ENCODE measurements at regions of chr5 and their contacts with region 1.

Region 1: DNA sequence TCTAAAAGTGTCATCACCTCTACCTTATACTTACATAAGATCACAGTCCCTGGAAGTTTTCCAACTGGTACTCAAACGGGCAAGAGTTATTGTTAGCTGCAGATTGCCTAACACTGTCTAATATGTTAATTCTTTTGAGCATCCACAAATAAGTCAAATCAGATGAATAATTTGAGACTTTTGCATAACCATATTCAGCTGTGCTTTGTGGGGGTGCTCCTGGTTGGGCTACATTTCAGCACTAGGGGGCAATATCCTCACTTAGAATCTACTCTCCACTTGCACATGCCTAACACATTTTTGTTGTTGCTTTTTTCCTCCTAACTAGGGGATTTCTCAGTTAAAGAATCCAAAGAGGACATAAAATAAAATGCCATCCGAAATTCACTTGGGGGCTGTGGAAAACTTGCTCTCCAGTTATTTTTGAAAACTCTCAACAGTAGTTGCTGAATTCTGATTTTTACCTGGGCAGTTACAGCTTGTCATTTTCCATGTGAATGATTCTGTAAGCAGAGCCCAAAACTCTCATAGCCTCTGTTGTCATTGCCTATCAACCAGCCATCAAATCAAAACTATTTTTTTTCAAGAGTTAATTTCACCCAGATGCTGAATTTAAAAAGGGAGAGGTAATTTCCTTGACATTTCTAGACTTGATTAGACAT is 71.5 kb downstream of the TRIM36 start:
- DNase-seq: peak; percentile 57
- CTCF ChIP-seq: peak; percentile 74

Region 2: GRCh38 chr5:115109840-115110239 is 11.7 kb after region 1 on chr5:
- CTCF ChIA-PET with region 1: interaction called, 14 read pairs
- POLR2A ChIA-PET with region 1: no interaction called
- DNase-seq: no peak
- CTCF ChIP-seq: no peak

Region 3: DNA sequence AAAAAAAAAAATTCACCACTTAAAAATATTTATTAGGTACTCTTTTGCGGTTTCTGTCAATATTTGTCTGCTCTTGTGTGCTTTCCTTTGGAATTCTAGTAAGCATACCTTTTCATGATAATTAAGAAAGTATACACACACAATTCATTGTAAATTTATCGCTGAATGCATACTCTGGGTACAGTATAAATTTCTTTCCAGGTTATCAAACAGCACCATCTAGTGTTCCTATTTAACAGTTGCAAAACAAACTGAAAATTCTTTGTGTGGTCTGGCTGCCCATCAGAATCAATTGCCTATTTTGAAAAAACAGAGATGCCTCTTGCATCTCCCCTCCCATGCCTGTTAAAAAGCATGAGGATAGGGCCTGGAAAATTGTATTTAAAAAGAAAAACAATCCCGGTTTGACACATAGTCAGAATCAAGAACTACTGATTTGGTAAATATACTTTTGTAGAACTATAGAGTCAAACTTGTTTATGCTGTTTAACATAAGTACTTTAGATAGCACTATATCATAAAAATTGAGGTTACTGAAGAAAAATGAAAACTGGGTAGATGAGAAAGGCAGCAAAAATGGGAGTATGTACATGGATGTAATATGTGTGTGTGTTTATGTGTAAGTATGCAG is 148.3 kb after region 1 on chr5:
- CTCF ChIA-PET with region 1: interaction called, 35 read pairs
- POLR2A ChIA-PET with region 1: no interaction called
- DNase-seq: peak; percentile 37
- CTCF ChIP-seq: peak; percentile 37

Region 4: DNA sequence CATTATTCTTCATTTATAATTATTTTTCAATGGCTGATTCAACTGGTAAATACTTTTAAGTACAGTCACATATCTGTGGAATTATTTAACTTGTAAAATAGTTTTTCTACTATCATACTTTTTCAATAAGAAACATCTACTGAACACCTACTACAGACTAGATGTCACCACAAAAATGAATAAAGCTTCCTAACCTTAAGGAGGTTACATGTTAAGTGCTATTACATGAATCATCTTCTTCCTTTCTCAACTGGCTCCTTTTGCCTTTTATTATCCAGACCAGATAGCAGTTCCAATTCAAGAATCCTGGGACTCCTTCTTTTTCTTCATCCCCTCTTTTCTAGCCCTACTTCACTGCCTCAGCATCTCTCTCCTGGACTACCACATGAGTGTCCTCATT is 159.8 kb after region 1 on chr5:
- CTCF ChIA-PET with region 1: interaction called, 10 read pairs
- POLR2A ChIA-PET with region 1: no interaction called
- DNase-seq: no peak
- CTCF ChIP-seq: no peak

Measured in GM10248 (cell line).